Activated CD8-positive, alpha-beta T cell treated with anti-CD3 and anti-CD28 coated beads for 36 hours (primary cell): ENCODE measurements at regions of chr7 and their contacts with region 1.

Region 1: DNA sequence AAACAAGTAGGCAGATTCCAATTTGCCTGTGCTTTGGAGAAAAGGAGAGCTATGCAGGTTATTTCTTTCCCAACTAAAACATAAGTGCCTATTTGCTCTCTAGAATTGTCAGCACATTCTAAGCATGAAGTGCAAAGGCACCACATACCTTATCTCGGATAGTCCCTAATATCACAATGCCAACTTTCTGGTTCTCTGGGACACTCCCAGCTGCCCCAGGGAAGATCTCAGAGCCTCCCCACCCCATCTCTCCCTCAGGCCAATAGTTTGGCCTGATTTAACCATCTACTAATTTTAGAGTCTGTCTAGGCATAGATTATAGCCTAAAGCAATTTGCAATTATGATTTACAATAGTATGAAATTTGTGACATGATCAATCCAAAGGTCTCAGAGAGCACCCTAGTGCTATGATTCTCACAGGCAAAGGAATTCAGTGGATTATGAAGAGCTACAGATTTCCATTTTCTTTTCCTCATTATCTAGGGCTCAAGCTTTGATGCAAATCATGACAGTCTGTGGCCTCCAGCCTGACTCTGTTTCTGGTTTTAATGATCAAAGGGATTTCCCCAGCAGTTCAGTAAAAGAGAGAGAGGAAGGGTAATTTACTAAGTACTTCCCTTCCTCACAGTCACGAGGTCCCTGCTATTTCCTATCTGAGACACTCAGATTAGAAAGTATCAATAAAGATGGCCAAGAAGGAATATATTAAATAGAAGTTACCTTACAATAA is 29.0 kb upstream of the IL6 start:
- DNase-seq: peak; percentile 54
- ATAC-seq: peak; percentile 81
- H3K4me3 Mint-ChIP-seq: no peak overlapping the region
- H3K27ac Mint-ChIP-seq: peak overlapping the region; percentile 60
- H3K4me1 Mint-ChIP-seq: peaks cover 50% of the 10 kb centered on the region
- H3K27me3 Mint-ChIP-seq: peaks cover 19% of the 10 kb centered on the region
- CTCF ChIP-seq: no peak

Region 2: DNA sequence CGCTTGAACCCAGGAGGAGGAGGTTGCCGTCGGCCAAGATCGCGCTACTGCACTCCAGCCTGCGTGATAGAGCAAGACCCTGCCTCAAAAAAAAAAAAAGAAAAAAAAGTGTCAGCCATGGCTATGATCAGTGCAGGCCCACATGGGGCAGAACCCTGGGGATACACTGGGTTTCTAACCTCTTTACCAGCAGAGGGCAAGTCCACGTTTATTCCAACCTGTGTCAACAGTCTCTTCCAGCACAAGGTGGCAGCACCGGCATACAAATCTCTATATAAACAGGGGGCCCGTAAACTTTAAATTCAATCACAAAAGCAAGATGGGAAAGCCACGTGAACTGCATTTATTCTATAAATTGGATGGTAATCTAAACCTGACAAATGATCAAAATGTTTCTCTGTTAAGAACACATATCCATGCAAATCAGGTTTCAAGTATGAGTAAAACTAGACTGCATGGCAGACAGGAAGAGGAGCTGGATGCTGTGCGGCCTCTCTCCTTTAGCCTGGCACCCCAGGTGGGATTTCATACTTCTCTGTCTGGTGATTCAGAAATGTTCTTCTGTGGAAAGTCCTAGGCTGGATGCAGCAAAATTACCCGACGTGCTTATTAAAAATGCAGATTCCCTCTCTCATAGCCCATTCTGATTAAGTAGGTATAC is 138.1 kb before region 1 on chr7:
- CTCF ChIA-PET with region 1: interaction called, 10 read pairs
- POLR2A ChIA-PET with region 1: no interaction called
- intact Hi-C with region 1: no loop called
- DNase-seq: peak; percentile 83
- ATAC-seq: peak; percentile 82
- H3K4me3 Mint-ChIP-seq: no peak overlapping the region
- H3K27ac Mint-ChIP-seq: no peak overlapping the region
- H3K4me1 Mint-ChIP-seq: peaks cover 25% of the 10 kb centered on the region
- H3K27me3 Mint-ChIP-seq: peaks cover 21% of the 10 kb centered on the region
- CTCF ChIP-seq: peak; percentile 90

Region 3: GRCh38 chr7:22712999-22713398 is 15.0 kb after region 1 on chr7:
- CTCF ChIA-PET with region 1: no interaction called
- POLR2A ChIA-PET with region 1: no interaction called
- intact Hi-C with region 1: no loop called
- DNase-seq: no peak
- ATAC-seq: no peak
- H3K4me3 Mint-ChIP-seq: no peak overlapping the region
- H3K27ac Mint-ChIP-seq: no peak overlapping the region
- H3K4me1 Mint-ChIP-seq: no peaks in the 10 kb centered on the region
- H3K27me3 Mint-ChIP-seq: peaks cover 19% of the 10 kb centered on the region
- CTCF ChIP-seq: no peak